GM23248 (cell line): ENCODE measurements at regions of chr18 and their contacts with region 1.

Region 1: DNA sequence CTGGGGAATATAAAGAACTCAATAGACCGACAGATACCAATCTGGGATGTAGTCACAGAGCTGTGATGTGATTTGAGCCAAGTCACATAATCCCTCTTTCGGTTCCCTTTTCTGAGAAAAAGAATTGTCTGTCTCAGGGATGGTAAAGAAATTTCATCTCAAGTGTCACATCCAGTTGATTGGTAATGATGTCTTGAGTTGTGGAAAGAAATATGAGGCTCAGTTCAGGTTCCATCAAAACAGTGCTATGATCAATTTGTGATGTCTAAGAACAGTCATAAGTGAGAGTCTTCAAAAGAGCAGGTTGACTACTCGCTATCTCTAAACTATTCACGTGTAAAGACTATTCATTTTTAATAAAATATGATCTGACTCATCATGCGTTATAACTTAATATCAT is 223.3 kb downstream of the METTL4 start:
- DNase-seq: no peak
- H3K4me3 ChIP-seq: no peak overlapping the region
- H3K27ac ChIP-seq: no peak overlapping the region
- H3K4me1 ChIP-seq: 0 out of 2 replicates have a peak, but pooled peaks cover 7% of the 10 kb centered on the region
- H3K27me3 ChIP-seq: no peaks in the 10 kb centered on the region; the same call in 1 of the 2 replicates

Region 2: GRCh38 chr18:1618364-1618763 is 729.6 kb before region 1 on chr18:
- in situ Hi-C with region 1: no loop called
- DNase-seq: no peak
- H3K4me3 ChIP-seq: no peak overlapping the region
- H3K27ac ChIP-seq: no peak overlapping the region
- H3K4me1 ChIP-seq: no peaks in the 10 kb centered on the region
- H3K27me3 ChIP-seq: no peaks in the 10 kb centered on the region

Region 3: GRCh38 chr18:2070619-2071018 is 277.4 kb before region 1 on chr18:
- in situ Hi-C with region 1: no loop called
- DNase-seq: no peak
- H3K4me3 ChIP-seq: no peak overlapping the region
- H3K27ac ChIP-seq: no peak overlapping the region
- H3K4me1 ChIP-seq: no peaks in the 10 kb centered on the region
- H3K27me3 ChIP-seq: no peaks in the 10 kb centered on the region

Region 4: DNA sequence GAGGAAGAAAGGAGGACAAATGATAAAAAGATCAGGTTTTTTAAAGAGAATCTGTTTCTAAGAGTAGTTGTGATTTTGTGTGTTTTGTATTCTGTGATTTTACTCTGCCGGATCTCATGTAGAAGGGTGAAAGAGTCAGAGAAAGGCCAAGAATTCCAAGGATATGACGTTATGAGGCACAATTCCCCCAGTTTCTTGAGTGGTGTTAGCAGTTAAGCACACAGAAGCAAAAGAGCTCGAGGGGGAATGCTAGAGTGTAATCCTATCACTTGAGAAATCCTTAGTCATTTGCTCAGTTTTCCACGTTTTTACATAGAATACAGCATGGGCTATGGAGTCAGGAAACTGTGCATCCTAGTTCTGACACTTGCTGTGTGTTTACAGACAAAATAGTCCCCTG is 188.5 kb after region 1 on chr18:
- in situ Hi-C with region 1: loop called (anchors 10 kb)
- DNase-seq: no peak
- H3K4me3 ChIP-seq: no peak overlapping the region
- H3K27ac ChIP-seq: no peak overlapping the region
- H3K4me1 ChIP-seq: no peaks in the 10 kb centered on the region
- H3K27me3 ChIP-seq: no peaks in the 10 kb centered on the region

Region 5: GRCh38 chr18:2917259-2918047 is 569.5 kb after region 1 on chr18:
- in situ Hi-C with region 1: no loop called
- DNase-seq: no peak
- H3K4me3 ChIP-seq: no peak overlapping the region
- H3K27ac ChIP-seq: no peak overlapping the region
- H3K4me1 ChIP-seq: no peaks in the 10 kb centered on the region
- H3K27me3 ChIP-seq: no peaks in the 10 kb centered on the region